AG04449 (cell line): ENCODE measurements at regions of chr19 and their contacts with region 1.

Region 1: DNA sequence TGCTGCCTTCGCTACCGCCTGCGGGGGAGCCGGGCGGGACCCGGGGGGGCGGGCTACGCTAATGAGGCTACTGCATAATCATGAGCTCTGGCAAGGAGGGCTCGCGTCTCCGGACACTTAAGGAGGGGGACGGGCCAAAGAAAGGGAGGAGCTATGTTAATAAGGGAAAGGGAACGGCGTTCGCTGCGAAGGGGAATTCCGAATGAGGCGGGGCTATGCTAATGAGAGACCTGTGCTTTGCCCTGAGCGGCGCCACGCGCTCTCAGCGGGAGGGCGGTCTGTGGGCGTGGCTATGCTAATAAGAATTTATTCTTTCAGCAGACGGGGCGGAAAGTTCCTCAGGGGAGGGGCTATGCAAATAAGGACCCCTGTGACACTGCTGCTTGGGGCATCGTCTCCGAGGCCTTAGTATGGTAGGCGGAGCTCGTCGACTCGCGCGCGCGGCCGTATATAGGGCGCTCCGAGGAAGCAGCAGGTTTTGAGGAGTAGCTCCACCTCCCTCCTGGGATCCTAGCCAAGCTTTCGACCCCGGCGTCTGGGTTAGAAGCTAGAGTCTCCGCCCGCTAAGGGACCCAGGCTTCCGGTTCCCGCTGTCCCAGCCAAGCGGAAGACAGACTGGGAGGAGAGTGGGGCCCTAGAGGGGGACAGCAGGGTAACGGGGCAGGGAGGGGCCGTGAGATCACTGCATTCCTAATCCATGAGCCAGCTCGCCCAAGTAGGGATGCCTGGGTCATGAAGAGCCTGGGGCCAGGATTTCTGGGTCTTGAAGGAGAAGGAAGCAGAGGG is at the start of gene RRAS:
- DNase-seq: peak; percentile 99
- H3K4me3 ChIP-seq: peak within 1 kb of the TSS; percentile 63
- CTCF ChIP-seq: no peak

Region 2: GRCh38 chr19:49580264-49581006 is 59.9 kb before region 1 on chr19 and contains the start of gene NOSIP:
- CTCF ChIA-PET with region 1: no interaction called
- POLR2A ChIA-PET with region 1: interaction called, 14 read pairs
- DNase-seq: peak; percentile 84
- H3K4me3 ChIP-seq: peak within 1 kb of the TSS; percentile 84
- CTCF ChIP-seq: no peak

Region 3: GRCh38 chr19:49590071-49590970 is 50.0 kb before region 1 on chr19:
- CTCF ChIA-PET with region 1: interaction called, 3 read pairs
- POLR2A ChIA-PET with region 1: interaction called, 16 read pairs
- DNase-seq: peak; percentile 67
- H3K4me3 ChIP-seq: peak overlapping the region; percentile 85
- CTCF ChIP-seq: no peak

Region 4: GRCh38 chr19:49655570-49656455 is 15.5 kb after region 1 on chr19:
- CTCF ChIA-PET with region 1: no interaction called
- POLR2A ChIA-PET with region 1: interaction called, 15 read pairs
- DNase-seq: no peak
- H3K4me3 ChIP-seq: no peak overlapping the region
- CTCF ChIP-seq: no peak